ENCODE measurements at regions of chr16 and their contacts with region 1.

Region 1: DNA sequence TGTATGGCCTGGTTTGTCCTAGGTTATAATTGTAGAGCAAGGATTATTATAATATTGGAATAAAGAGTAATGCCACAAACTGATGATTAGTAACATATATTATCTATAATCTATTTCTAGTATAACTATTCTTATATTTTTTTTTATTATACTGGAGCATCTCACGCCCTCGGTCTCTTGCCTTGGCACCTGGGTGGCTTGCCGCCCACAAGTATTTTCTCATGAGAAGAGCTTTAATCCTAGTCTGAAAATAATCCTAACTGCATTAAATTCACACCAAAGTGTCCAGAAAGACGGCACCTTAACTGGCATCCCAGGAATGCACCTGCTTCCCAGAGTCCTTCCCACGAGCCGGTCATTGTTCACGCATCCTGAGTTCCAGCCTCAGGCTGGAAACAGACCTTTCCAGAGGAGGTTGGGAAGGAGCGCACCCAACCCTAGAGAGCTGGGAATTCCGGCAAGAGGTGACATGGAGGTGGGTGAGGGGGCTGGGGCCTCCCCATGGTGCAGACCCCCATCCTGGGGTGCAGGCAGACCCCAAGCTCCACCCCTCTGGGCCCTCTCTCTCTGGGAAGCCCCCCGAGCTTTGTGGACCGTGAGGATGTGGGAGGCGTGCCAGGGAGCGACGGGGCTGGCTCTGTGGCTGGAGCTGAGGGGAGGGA is 15.9 kb downstream of the CHMP1A start:
- DNase-seq: no peak
- H3K4me3 ChIP-seq: peak overlapping the region in 2 of 8 donors; percentile 38 to 53
- H3K27ac ChIP-seq: no peak overlapping the region
- H3K4me1 ChIP-seq: peaks cover 0 to 20% (median 12%) of the 10 kb centered on the region in 6 donors
- H3K27me3 ChIP-seq: peaks cover 0 to 20% (median 0%) of the 10 kb centered on the region in 7 donors
- CTCF ChIP-seq: peak in 2 of 11 experiments; percentile 5 to 51
- POLR2A ChIP-seq: no peak

Region 2: GRCh38 chr16:89392886-89393737 is 248.5 kb before region 1 on chr16:
- intact Hi-C with region 1: no loop called
- DNase-seq: no peak
- H3K4me3 ChIP-seq: no peak overlapping the region
- H3K27ac ChIP-seq: peak overlapping the region in 3 of 8 donors; percentile 2 to 50 (median 46)
- H3K4me1 ChIP-seq: peaks cover 31 to 91% (median 56%) of the 10 kb centered on the region in 6 donors
- H3K27me3 ChIP-seq: no peaks in the 10 kb centered on the region
- CTCF ChIP-seq: no peak
- POLR2A ChIP-seq: no peak

Region 3: DNA sequence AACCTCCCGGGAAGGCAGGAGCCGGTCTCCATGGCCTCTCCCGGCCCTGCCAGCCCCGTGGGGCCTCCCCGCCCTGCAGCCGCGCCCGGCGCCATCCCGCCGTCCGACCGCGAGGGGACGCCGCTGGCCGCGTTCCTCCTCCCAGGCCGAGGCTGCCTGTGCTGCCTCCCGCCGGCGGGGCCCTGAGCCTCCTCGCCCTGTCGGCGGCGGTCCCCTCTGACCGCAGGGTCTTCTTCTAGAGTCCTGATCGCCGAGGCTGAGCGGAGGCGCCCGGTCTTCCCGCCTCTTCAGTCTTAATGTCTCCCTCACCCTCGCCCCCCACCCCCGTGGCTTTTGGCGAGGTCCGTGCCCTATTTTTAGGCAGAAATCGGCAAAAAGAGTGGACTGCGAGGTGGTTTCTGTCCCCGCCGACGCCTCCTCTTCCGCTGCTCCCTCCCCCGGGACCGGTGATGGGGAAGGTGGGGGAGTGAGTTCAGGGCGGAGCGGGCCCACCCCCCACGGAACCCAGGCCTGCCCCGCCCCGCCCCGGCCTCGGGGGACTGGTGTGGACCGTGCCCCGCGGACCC is 66.8 kb before region 1 on chr16:
- intact Hi-C with region 1: loop called (anchors 10 kb)
- DNase-seq: peak; percentile 85
- H3K4me3 ChIP-seq: peak overlapping the region; percentile 13 to 70 (median 37)
- H3K27ac ChIP-seq: no peak overlapping the region
- H3K4me1 ChIP-seq: peaks cover 11 to 38% (median 25%) of the 10 kb centered on the region in 6 donors
- H3K27me3 ChIP-seq: peaks cover 5 to 76% (median 42%) of the 10 kb centered on the region in 7 donors
- CTCF ChIP-seq: peak in 10 of 11 experiments; percentile 23 to 84 (median 64)
- POLR2A ChIP-seq: no peak

Region 4: DNA sequence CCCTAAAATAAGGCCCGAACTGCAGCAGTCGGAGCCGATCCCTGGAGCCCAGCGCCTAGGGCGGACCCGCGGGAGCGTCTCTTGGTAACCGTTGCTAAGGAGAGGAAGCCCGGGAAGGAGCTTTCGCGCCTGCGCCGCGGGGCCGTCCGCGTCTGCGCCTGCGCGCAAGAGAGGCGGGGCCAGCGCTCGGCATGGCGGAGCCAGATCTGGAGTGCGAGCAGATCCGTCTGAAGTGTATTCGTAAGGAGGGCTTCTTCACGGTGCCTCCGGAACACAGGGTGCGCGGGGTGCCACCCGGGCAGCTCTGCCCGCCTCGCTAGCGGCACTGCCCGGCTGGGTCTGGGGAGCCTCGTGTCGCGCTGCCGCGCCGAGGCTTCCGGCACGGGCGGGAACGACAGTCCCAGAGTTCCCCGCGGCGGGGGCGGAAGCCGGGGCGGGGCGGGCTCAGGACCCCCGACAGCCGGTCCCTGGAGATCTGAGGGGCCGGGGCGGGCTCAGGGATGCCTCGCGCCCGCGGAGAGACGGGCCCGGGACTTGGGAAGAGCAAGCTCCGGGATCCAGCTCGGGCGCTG is 45.0 kb after region 1 on chr16 and contains the start of gene CDK10:
- intact Hi-C with region 1: no loop called
- DNase-seq: peak; percentile 95
- H3K4me3 ChIP-seq: peak within 1 kb of the TSS; percentile 81 to 99 (median 97)
- H3K27ac ChIP-seq: peak within 1 kb of the TSS; percentile 89 to 96 (median 92)
- H3K4me1 ChIP-seq: peaks cover 7 to 33% (median 19%) of the 10 kb centered on the region in 6 donors
- H3K27me3 ChIP-seq: no peaks in the 10 kb centered on the region
- CTCF ChIP-seq: peak in 3 of 11 experiments; percentile 13 to 32 (median 27)
- POLR2A ChIP-seq: peak in 1 of 3 donors; percentile 54
- total RNA-seq, gene CDK10: 47.6 to 114 (median 76.3) TPM